B cell (primary cell): ENCODE measurements at regions of chr14 and their contacts with region 1.

Region 1: GRCh38 chr14:36941783-36942521 is 230.5 kb downstream of the SLC25A21 start:
- DNase-seq: peak; percentile 21
- ATAC-seq: no peak
- H3K4me3 ChIP-seq: no peak overlapping the region
- H3K4me3 Mint-ChIP-seq: no peak overlapping the region
- H3K27ac ChIP-seq: no peak overlapping the region
- H3K27ac Mint-ChIP-seq: no peak overlapping the region
- H3K4me1 ChIP-seq: no peaks in the 10 kb centered on the region
- H3K4me1 Mint-ChIP-seq: no peaks in the 10 kb centered on the region
- H3K27me3 ChIP-seq: no peaks in the 10 kb centered on the region
- H3K27me3 Mint-ChIP-seq: no peaks in the 10 kb centered on the region
- CTCF ChIP-seq: peak; percentile 98

Region 2: GRCh38 chr14:35883677-35884293 is 1058.2 kb before region 1 on chr14:
- CTCF ChIA-PET with region 1: interaction called, 5 read pairs
- POLR2A ChIA-PET with region 1: no interaction called
- intact Hi-C with region 1: loop called (anchors 10 kb)
- DNase-seq: no peak
- ATAC-seq: no peak
- H3K4me3 ChIP-seq: no peak overlapping the region
- H3K4me3 Mint-ChIP-seq: no peak overlapping the region
- H3K27ac ChIP-seq: no peak overlapping the region
- H3K27ac Mint-ChIP-seq: no peak overlapping the region
- H3K4me1 ChIP-seq: peaks cover 5% of the 10 kb centered on the region in 2 donors
- H3K4me1 Mint-ChIP-seq: peaks cover 3% of the 10 kb centered on the region
- H3K27me3 ChIP-seq: no peaks in the 10 kb centered on the region
- H3K27me3 Mint-ChIP-seq: peaks cover 11% of the 10 kb centered on the region
- CTCF ChIP-seq: peak; percentile 55

Region 3: GRCh38 chr14:36553656-36554260 is 388.2 kb before region 1 on chr14:
- CTCF ChIA-PET with region 1: interaction called, 3 read pairs
- POLR2A ChIA-PET with region 1: no interaction called
- intact Hi-C with region 1: loop called (anchors 5 kb)
- DNase-seq: no peak
- ATAC-seq: no peak
- H3K4me3 ChIP-seq: no peak overlapping the region
- H3K4me3 Mint-ChIP-seq: no peak overlapping the region
- H3K27ac ChIP-seq: no peak overlapping the region
- H3K27ac Mint-ChIP-seq: no peak overlapping the region
- H3K4me1 ChIP-seq: no peaks in the 10 kb centered on the region
- H3K4me1 Mint-ChIP-seq: no peaks in the 10 kb centered on the region
- H3K27me3 ChIP-seq: no peaks in the 10 kb centered on the region
- H3K27me3 Mint-ChIP-seq: peaks cover 9% of the 10 kb centered on the region
- CTCF ChIP-seq: peak; percentile 32

Region 4: DNA sequence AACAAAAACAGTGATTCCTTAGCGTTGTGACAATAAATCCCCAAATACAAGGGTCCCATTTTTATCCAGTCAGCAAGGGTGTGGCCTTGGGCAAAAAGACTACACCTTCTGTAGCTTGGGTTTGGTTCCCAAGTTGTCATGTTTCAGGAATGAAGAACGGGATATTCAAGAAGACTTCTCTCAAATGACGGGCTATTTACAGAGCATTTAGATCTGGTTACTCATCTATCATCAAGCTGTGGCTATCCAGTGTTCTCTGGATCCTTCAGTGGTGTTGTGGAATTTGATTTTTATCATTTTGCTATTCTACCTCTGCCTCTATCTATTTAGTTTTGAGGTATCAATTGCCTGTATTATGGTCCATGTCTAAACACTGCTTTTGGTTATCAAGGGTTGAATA is 10.8 kb after region 1 on chr14:
- CTCF ChIA-PET with region 1: interaction called, 12 read pairs
- POLR2A ChIA-PET with region 1: no interaction called
- intact Hi-C with region 1: no loop called
- DNase-seq: no peak
- ATAC-seq: no peak
- H3K4me3 ChIP-seq: no peak overlapping the region
- H3K4me3 Mint-ChIP-seq: no peak overlapping the region
- H3K27ac ChIP-seq: no peak overlapping the region
- H3K27ac Mint-ChIP-seq: no peak overlapping the region
- H3K4me1 ChIP-seq: no peaks in the 10 kb centered on the region
- H3K4me1 Mint-ChIP-seq: no peaks in the 10 kb centered on the region
- H3K27me3 ChIP-seq: no peaks in the 10 kb centered on the region
- H3K27me3 Mint-ChIP-seq: peaks cover 4% of the 10 kb centered on the region
- CTCF ChIP-seq: no peak